ENCODE measurements at regions of chr4 and their contacts with region 1.

Region 1: GRCh38 chr4:140252742-140253555 is 99.0 kb upstream of the MAML3 start:
- DNase-seq: peak; percentile 43
- ATAC-seq: peak; percentile 85
- H3K4me3 ChIP-seq: peak overlapping the region; percentile 43 to 56
- H3K27ac ChIP-seq: peak overlapping the region; percentile 51; the same call in 1 of the 2 replicates
- H3K4me1 ChIP-seq: peaks cover 2 to 47% of the 10 kb centered on the region in 2 experiments; a peak in 3 of 4 replicates
- H3K27me3 ChIP-seq: no peaks in the 10 kb centered on the region
- CTCF ChIP-seq: peak; percentile 53 to 92 (median 76); a peak in 5 of 6 replicates
- POLR2A ChIP-seq: no peak
- RAD21 ChIP-seq: peak; percentile 85

Region 2: DNA sequence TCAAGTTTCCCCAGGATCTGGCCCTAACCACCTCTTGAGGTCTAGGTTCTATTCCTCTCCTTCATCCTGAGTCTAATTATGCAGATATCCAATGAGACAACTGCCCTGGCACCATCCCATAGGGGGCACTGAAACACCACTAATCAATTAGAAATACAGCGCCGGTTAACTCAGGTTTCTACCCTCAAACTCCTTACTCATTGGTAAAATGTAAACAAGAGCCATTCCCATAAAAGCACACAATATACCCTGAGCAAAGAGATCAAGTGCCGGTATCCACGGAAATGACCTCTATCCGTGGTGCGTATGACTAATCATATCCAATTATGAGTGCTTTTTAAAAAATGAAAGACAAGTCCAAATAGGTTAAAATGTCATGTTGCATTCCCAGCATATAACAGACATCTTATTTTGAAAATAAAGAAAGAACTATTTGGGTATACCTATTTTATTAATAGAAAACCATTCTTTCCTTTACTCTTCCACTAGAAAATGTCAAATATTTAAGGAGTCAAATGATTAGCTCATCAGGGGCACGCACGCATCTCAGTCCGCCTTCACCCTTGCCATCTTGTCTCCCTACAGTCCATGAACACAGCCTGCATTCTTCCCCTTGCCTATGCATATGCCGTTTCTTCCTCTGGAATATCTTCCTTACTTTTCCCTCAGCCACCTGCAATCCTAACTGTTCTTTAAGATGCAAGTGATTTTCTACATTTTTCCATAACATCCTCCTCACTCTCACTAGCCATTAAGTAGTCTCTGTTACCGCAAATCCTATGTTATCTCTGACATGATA is 240.1 kb before region 1 on chr4:
- CTCF ChIA-PET with region 1: interaction called, 4 read pairs
- POLR2A ChIA-PET with region 1: no interaction called
- RAD21 ChIA-PET with region 1: no interaction called
- intact Hi-C with region 1: loop called (anchors 1 kb)
- DNase-seq: peak; percentile 50
- ATAC-seq: peak; percentile 98
- H3K4me3 ChIP-seq: no peak overlapping the region
- H3K27ac ChIP-seq: no peak overlapping the region
- H3K4me1 ChIP-seq: peaks cover 3 to 7% of the 10 kb centered on the region in 2 experiments; a peak in 2 of 4 replicates
- H3K27me3 ChIP-seq: no peaks in the 10 kb centered on the region
- CTCF ChIP-seq: peak; percentile 69 to 87 (median 78)
- POLR2A ChIP-seq: no peak
- RAD21 ChIP-seq: peak; percentile 95

Region 3: DNA sequence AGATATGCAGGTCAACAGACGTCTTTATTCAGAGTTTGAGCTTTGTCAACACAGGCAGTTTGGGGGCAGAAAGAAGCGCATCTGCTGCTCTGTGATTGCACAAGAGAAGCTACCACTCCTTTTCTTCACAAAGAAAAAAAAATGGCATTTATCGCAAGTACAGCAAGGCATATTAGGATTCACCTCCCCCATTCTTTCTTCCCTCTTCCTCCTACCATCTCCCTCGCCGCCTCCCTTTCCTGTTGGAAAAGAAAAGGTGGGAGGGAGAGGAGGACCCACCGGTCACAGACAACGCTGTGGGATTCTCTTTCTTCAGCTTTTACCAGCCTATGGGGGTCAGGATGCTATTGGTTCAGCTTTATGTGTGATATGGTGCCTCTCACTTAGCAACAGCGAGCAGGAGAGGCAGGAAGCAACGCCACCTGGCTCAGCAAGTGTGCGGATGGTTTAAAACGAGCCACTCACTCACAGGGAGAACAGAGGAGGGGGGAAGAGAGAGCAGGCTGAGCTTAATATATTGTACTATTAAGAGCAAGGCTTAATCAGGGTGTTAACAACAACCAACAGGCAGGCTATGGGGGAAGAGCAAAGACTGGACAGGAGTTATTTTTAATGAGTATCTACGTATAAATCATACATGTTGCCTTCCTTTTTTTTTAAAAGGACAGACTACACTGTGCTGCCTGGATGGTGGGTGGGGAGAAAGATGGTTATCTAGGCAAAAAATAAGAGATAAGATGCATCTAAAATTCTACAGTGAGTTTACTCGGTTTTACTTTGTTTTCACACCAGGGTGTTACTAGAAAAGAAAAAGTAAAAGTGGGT is 203.7 kb before region 1 on chr4:
- CTCF ChIA-PET with region 1: interaction called, 10 read pairs
- POLR2A ChIA-PET with region 1: interaction called, 4 read pairs
- RAD21 ChIA-PET with region 1: interaction called in 1 of 2 experiments, 4 read pairs
- intact Hi-C with region 1: loop called (anchors 1 kb)
- DNase-seq: no peak
- ATAC-seq: no peak
- H3K4me3 ChIP-seq: no peak overlapping the region
- H3K27ac ChIP-seq: no peak overlapping the region
- H3K4me1 ChIP-seq: peaks cover 0 to 6% of the 10 kb centered on the region in 2 experiments; a peak in 1 of 4 replicates
- H3K27me3 ChIP-seq: peaks cover 8% of the 10 kb centered on the region; the same call in 1 of the 2 replicates
- CTCF ChIP-seq: no peak
- POLR2A ChIP-seq: no peak
- RAD21 ChIP-seq: no peak